ENCODE measurements at regions of chr1 and their contacts with region 1.

Region 1: GRCh38 chr1:201229771-201230635 is 39.4 kb downstream of the IGFN1 start:
- DNase-seq: no peak
- H3K4me3 ChIP-seq: no peak overlapping the region
- H3K27ac ChIP-seq: no peak overlapping the region
- H3K4me1 ChIP-seq: no peaks in the 10 kb centered on the region
- H3K27me3 ChIP-seq: no peaks in the 10 kb centered on the region
- CTCF ChIP-seq: no peak
- EP300 ChIP-seq: no peak
- POLR2A ChIP-seq: no peak

Region 2: GRCh38 chr1:200971955-200972711 is 257.9 kb before region 1 on chr1:
- in situ Hi-C with region 1: no loop called
- intact Hi-C with region 1: loop called (anchors 10 kb)
- DNase-seq: peak; percentile 66
- H3K4me3 ChIP-seq: no peak overlapping the region
- H3K27ac ChIP-seq: no peak overlapping the region
- H3K4me1 ChIP-seq: peaks cover 3 to 22% (median 13%) of the 10 kb centered on the region in 4 donors
- H3K27me3 ChIP-seq: no peaks in the 10 kb centered on the region
- CTCF ChIP-seq: peak; percentile 79 to 98 (median 96)
- EP300 ChIP-seq: no peak
- POLR2A ChIP-seq: no peak

Region 3: GRCh38 chr1:201149400-201149799 is 80.6 kb before region 1 on chr1:
- in situ Hi-C with region 1: loop called in 1 of 4 experiments (anchors 10 kb)
- intact Hi-C with region 1: no loop called
- DNase-seq: no peak
- H3K4me3 ChIP-seq: no peak overlapping the region
- H3K27ac ChIP-seq: no peak overlapping the region
- H3K4me1 ChIP-seq: peaks cover 6 to 15% (median 10%) of the 10 kb centered on the region in 4 donors
- H3K27me3 ChIP-seq: no peaks in the 10 kb centered on the region
- CTCF ChIP-seq: peak in 4 of 5 experiments; percentile 38 to 53 (median 48)
- EP300 ChIP-seq: no peak
- POLR2A ChIP-seq: no peak